Caco-2 (cell line): ENCODE measurements at regions of chr1 and their contacts with region 1.

Region 1: GRCh38 chr1:8121261-8122170 is 95.4 kb upstream of the ERRFI1 start:
- DNase-seq: peak; percentile 12 to 50
- H3K4me3 ChIP-seq: no peak overlapping the region
- H3K4me3 Mint-ChIP-seq: peak overlapping the region; percentile 40
- H3K27ac Mint-ChIP-seq: peak overlapping the region; percentile 79
- H3K4me1 ChIP-seq: peaks cover 56% of the 10 kb centered on the region
- H3K4me1 Mint-ChIP-seq: peaks cover 42% of the 10 kb centered on the region
- H3K27me3 ChIP-seq: no peaks in the 10 kb centered on the region
- H3K27me3 Mint-ChIP-seq: no peaks in the 10 kb centered on the region
- CTCF ChIP-seq: no peak

Region 2: GRCh38 chr1:8077120-8077573 is 44.4 kb before region 1 on chr1:
- CTCF ChIA-PET with region 1: no interaction called
- POLR2A ChIA-PET with region 1: no interaction called
- intact Hi-C with region 1: loop called (anchors 5 kb)
- DNase-seq: peak; percentile 45 to 77
- H3K4me3 ChIP-seq: no peak overlapping the region
- H3K4me3 Mint-ChIP-seq: no peak overlapping the region
- H3K27ac Mint-ChIP-seq: peak overlapping the region; percentile 84
- H3K4me1 ChIP-seq: peaks cover 64% of the 10 kb centered on the region
- H3K4me1 Mint-ChIP-seq: peaks cover 53% of the 10 kb centered on the region
- H3K27me3 ChIP-seq: no peaks in the 10 kb centered on the region
- H3K27me3 Mint-ChIP-seq: no peaks in the 10 kb centered on the region
- CTCF ChIP-seq: no peak

Region 3: GRCh38 chr1:8137481-8138244 is 16.1 kb after region 1 on chr1:
- CTCF ChIA-PET with region 1: no interaction called
- POLR2A ChIA-PET with region 1: no interaction called
- intact Hi-C with region 1: no loop called
- DNase-seq: no peak
- H3K4me3 ChIP-seq: no peak overlapping the region
- H3K4me3 Mint-ChIP-seq: no peak overlapping the region
- H3K27ac Mint-ChIP-seq: no peak overlapping the region
- H3K4me1 ChIP-seq: peaks cover 5% of the 10 kb centered on the region; the same call in 1 of the 2 replicates
- H3K4me1 Mint-ChIP-seq: no peaks in the 10 kb centered on the region
- H3K27me3 ChIP-seq: no peaks in the 10 kb centered on the region
- H3K27me3 Mint-ChIP-seq: no peaks in the 10 kb centered on the region
- CTCF ChIP-seq: no peak

Region 4: GRCh38 chr1:8169364-8170058 is 48.0 kb after region 1 on chr1:
- CTCF ChIA-PET with region 1: interaction called, 9 read pairs
- POLR2A ChIA-PET with region 1: no interaction called
- intact Hi-C with region 1: loop called (anchors 5 kb)
- DNase-seq: peak; percentile 72 to 82
- H3K4me3 ChIP-seq: no peak overlapping the region
- H3K4me3 Mint-ChIP-seq: peak overlapping the region; percentile 53
- H3K27ac Mint-ChIP-seq: peak overlapping the region; percentile 91
- H3K4me1 ChIP-seq: peaks cover 27% of the 10 kb centered on the region
- H3K4me1 Mint-ChIP-seq: peaks cover 11% of the 10 kb centered on the region
- H3K27me3 ChIP-seq: no peaks in the 10 kb centered on the region
- H3K27me3 Mint-ChIP-seq: no peaks in the 10 kb centered on the region
- CTCF ChIP-seq: no peak

Region 5: DNA sequence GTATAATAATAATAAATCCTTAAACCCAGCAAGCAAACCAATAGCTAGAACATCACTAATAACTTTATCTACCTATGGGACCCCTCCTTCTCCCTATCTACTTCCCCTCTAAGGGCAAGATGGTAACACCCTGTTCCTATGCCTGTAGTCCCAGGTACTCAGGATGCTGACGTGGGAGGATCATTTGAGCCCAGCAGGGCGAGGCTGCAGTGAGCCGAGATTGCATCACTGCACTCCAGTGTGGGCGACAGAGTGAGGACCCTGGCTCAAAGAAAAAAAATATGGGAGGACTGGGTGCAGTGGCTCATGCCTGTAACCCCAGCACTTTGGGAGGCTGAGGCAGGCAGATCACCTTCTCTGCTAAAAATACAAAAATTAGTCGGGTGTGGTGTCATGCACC is 53.3 kb after region 1 on chr1:
- CTCF ChIA-PET with region 1: interaction called, 13 read pairs
- POLR2A ChIA-PET with region 1: no interaction called
- intact Hi-C with region 1: loop called (anchors 5 kb)
- DNase-seq: no peak
- H3K4me3 ChIP-seq: no peak overlapping the region
- H3K4me3 Mint-ChIP-seq: no peak overlapping the region
- H3K27ac Mint-ChIP-seq: no peak overlapping the region
- H3K4me1 ChIP-seq: peaks cover 10% of the 10 kb centered on the region
- H3K4me1 Mint-ChIP-seq: peaks cover 5% of the 10 kb centered on the region
- H3K27me3 ChIP-seq: no peaks in the 10 kb centered on the region
- H3K27me3 Mint-ChIP-seq: no peaks in the 10 kb centered on the region
- CTCF ChIP-seq: no peak

Region 6: GRCh38 chr1:9128520-9129265 is 1007.2 kb after region 1 on chr1 and contains the start of gene GPR157:
- CTCF ChIA-PET with region 1: no interaction called
- POLR2A ChIA-PET with region 1: no interaction called
- intact Hi-C with region 1: no loop called
- DNase-seq: peak; percentile 82 to 85
- H3K4me3 ChIP-seq: peak within 1 kb of the TSS; percentile 66
- H3K4me3 Mint-ChIP-seq: peak within 1 kb of the TSS; percentile 94
- H3K27ac Mint-ChIP-seq: peak within 1 kb of the TSS; percentile 93
- H3K4me1 ChIP-seq: peaks cover 13% of the 10 kb centered on the region
- H3K4me1 Mint-ChIP-seq: peaks cover 6% of the 10 kb centered on the region
- H3K27me3 ChIP-seq: no peaks in the 10 kb centered on the region
- H3K27me3 Mint-ChIP-seq: no peaks in the 10 kb centered on the region
- CTCF ChIP-seq: peak in 1 of 2 experiments; percentile 8
- total RNA-seq, gene GPR157: 14.0 and 17.2 TPM in 2 replicates